ENCODE measurements at regions of chr15 and their contacts with region 1.

Region 1: DNA sequence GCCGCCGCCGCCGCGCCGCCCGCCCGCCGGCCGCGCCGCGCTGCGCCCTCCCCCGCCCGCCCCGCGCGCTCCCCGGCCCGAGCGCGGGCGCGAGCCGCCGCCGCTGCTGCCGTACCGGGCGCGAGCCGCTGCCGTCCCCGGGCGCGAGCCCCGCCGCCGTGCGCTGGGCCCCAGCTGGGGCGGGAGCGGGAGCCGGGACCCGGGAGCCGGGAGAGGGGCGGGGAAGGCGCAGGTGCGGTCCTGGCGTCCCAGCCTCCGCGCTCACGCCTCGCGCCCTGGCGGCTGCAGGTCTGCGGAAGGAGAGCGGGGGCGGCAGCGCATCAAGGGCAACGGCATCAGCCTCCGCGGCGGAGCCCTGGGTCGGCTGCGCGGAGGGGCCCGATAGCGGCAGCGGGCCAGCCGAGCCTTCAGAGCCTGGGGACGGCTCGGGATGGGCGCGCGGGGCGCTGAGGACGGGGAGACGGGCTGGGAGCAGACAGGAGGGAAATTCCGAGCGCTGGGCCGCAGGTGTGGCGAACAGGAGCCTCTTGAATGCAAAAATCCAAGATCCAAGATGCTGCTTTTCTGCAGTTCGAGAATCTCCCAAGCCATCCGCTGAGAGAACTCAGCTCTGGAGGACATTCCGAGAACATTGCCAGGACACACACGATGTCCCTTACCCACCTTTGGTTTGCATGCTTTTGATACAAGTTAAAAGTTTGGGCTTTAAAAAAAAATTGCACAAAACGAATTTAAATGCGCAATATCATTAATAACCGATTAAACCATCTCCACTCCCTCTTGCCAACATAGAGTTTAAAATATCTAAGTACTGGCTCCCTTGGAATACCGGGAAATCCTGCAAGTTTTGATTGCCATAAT is 251.1 kb downstream of the TJP1 start:
- DNase-seq: peak in 1 of 2 experiments; percentile 62
- H3K4me3 ChIP-seq: peak overlapping the region; percentile 36
- H3K4me3 Mint-ChIP-seq: peak overlapping the region; percentile 60
- H3K27ac Mint-ChIP-seq: no peak overlapping the region
- H3K4me1 ChIP-seq: peaks cover 17% of the 10 kb centered on the region
- H3K4me1 Mint-ChIP-seq: peaks cover 7% of the 10 kb centered on the region
- H3K27me3 ChIP-seq: no peaks in the 10 kb centered on the region; the same call in 1 of the 2 replicates
- H3K27me3 Mint-ChIP-seq: peaks cover 49% of the 10 kb centered on the region
- CTCF ChIP-seq: no peak

Region 2: DNA sequence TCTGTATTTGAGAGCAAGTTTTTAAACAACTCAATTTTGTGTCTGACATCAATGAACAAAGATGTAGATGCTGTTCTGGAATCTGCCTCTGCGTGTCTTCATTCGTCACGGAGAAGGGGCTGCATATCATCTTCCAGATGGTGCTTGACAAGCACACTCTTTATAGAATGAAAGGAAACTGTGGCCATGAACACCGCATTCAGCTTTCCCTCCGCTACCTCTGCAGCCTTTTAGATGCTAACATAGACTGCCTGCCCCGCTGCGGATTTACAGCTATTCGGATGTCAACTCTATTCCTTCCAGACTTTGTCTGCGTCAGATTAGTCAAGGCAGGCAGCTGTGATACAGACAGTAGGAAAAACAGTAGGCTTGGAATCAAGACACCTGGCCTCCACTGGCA is 18.2 kb after region 1 on chr15:
- CTCF ChIA-PET with region 1: no interaction called
- POLR2A ChIA-PET with region 1: no interaction called
- intact Hi-C with region 1: no loop called
- DNase-seq: no peak
- H3K4me3 ChIP-seq: no peak overlapping the region
- H3K4me3 Mint-ChIP-seq: no peak overlapping the region
- H3K27ac Mint-ChIP-seq: no peak overlapping the region
- H3K4me1 ChIP-seq: no peaks in the 10 kb centered on the region
- H3K4me1 Mint-ChIP-seq: no peaks in the 10 kb centered on the region
- H3K27me3 ChIP-seq: no peaks in the 10 kb centered on the region
- H3K27me3 Mint-ChIP-seq: peaks cover 16% of the 10 kb centered on the region
- CTCF ChIP-seq: no peak

Region 3: DNA sequence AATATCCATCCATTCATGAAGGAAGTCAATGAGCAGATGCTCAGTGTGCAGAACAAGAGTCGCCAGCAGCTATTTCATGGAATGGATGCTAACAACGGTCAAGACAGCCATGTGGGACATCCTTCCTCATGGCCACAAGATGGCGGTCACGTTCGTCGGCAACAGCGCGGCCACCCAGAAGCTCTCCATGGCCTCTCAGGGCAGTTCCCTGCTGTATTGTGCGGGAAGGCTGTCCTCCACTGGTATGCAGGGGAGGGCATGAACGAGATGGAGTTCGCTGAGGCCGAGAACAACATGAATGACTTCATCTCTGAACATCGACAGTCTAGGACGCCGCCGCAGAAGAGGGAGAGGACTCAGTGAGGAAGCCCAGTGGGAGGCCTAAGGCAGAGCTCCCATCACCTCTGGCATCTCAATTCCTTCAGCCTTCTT is 42.8 kb after region 1 on chr15:
- CTCF ChIA-PET with region 1: no interaction called
- POLR2A ChIA-PET with region 1: no interaction called
- intact Hi-C with region 1: no loop called
- DNase-seq: peak; percentile 49 to 53
- H3K4me3 ChIP-seq: no peak overlapping the region
- H3K4me3 Mint-ChIP-seq: no peak overlapping the region
- H3K27ac Mint-ChIP-seq: no peak overlapping the region
- H3K4me1 ChIP-seq: peaks cover 21% of the 10 kb centered on the region
- H3K4me1 Mint-ChIP-seq: peaks cover 7% of the 10 kb centered on the region
- H3K27me3 ChIP-seq: no peaks in the 10 kb centered on the region
- H3K27me3 Mint-ChIP-seq: peaks cover 9% of the 10 kb centered on the region
- CTCF ChIP-seq: peak; percentile 41 to 61

Region 4: DNA sequence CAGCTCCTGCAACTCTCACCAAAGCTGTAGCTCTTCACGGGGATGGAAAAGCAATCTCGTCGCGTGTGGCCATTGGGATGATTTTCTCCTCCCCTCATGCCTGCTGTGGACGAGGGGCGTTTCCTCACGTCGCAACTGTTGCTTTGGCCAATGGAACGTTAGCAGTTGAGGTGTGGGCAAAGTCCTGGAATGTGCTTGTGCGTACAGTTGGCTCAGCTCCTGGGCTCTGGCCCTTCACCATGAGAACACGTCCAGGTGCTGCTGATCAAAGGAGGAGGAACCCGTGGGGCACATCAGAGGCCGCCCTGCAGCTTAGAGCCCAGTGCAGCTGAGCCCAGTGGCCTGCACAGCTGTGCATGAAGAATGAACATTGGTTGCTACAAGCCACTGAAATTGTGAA is 65.0 kb after region 1 on chr15:
- CTCF ChIA-PET with region 1: no interaction called
- POLR2A ChIA-PET with region 1: no interaction called
- intact Hi-C with region 1: loop called (anchors 5 kb)
- DNase-seq: peak; percentile 59 to 76
- H3K4me3 ChIP-seq: no peak overlapping the region
- H3K4me3 Mint-ChIP-seq: no peak overlapping the region
- H3K27ac Mint-ChIP-seq: no peak overlapping the region
- H3K4me1 ChIP-seq: no peaks in the 10 kb centered on the region
- H3K4me1 Mint-ChIP-seq: no peaks in the 10 kb centered on the region
- H3K27me3 ChIP-seq: no peaks in the 10 kb centered on the region
- H3K27me3 Mint-ChIP-seq: peaks cover 5% of the 10 kb centered on the region
- CTCF ChIP-seq: no peak

Measured in Caco-2 (cell line).